ENCODE measurements at regions of chr3 and their contacts with region 1.

Region 1: GRCh38 chr3:66971891-66972551 is 26.1 kb upstream of the KBTBD8 start:
- DNase-seq: peak; percentile 81
- ATAC-seq: peak; percentile 97
- H3K4me3 Mint-ChIP-seq: peak overlapping the region; percentile 36
- H3K27ac Mint-ChIP-seq: no peak overlapping the region; the same call in 1 of the 2 replicates
- H3K4me1 Mint-ChIP-seq: peaks cover 27% of the 10 kb centered on the region
- H3K27me3 Mint-ChIP-seq: peaks cover 12% of the 10 kb centered on the region
- CTCF ChIP-seq: peak; percentile 66

Region 2: DNA sequence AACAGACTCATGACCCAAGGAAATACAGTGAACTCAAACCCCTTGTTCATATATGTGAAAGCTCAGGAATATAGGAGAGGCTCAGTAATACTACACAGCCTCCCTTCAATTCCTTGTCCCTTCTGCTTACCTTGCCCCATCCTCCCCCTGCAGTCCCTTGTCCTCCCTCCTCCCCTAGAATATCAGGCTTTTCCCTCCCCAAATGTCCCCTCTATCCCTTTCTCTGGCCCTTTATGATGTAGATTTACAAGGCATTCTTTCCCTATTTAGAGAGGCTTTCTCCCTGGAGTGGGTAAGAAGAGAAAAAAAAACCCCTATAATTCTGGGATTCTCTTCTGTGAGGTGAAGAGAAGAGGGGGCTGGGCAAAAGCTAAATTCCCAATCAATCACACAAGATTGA is 38.8 kb before region 1 on chr3:
- CTCF ChIA-PET with region 1: interaction called, 56 read pairs
- POLR2A ChIA-PET with region 1: no interaction called
- DNase-seq: no peak
- ATAC-seq: peak; percentile 96
- H3K4me3 Mint-ChIP-seq: peak overlapping the region; percentile 16; the same call in 1 of the 2 replicates
- H3K27ac Mint-ChIP-seq: peak overlapping the region; percentile 55
- H3K4me1 Mint-ChIP-seq: peaks cover 67% of the 10 kb centered on the region
- H3K27me3 Mint-ChIP-seq: no peaks in the 10 kb centered on the region
- CTCF ChIP-seq: no peak

Region 3: GRCh38 chr3:66983101-66983500 is 11.1 kb after region 1 on chr3:
- CTCF ChIA-PET with region 1: interaction called, 62 read pairs
- POLR2A ChIA-PET with region 1: interaction called, 8 read pairs
- DNase-seq: no peak
- ATAC-seq: peak; percentile 65
- H3K4me3 Mint-ChIP-seq: no peak overlapping the region
- H3K27ac Mint-ChIP-seq: no peak overlapping the region
- H3K4me1 Mint-ChIP-seq: peaks cover 34% of the 10 kb centered on the region
- H3K27me3 Mint-ChIP-seq: no peaks in the 10 kb centered on the region
- CTCF ChIP-seq: no peak

Region 4: DNA sequence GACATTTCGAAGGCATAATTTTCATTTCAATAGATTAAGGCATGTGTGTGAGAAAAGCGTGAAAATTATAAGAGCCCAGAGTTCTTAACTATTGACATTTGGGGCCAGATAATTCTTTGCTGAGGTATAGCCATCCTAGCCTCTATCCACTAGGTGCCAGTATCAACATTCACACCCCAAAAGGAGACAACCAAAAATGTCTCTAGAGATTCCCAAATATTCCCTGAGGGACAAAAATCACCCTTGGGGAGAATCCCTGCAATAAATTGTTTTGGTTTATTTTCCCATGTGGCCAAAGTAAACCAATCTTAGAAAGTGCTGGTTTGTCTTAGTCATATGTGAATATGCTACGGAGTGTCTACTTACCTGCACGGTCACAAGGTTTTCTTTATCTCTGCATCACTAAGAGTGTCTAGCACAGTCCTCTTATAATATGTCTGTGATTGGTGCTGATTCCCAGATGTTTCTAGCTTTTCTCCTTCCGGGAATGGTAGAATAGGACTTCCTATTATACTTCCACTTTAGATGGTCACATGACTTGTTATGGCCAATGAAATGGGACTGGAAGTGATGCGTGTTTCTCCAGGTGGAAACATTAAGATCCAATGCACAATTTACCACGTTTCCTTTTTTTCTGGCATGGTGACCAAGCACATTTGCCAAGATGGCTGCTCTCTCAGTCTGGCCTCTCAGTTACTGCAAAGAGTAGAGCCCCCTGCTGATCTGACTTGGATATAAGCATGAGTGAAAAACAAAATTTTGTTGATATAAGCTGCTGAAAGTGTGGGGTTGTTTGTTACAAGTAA is 18.0 kb after region 1 on chr3:
- CTCF ChIA-PET with region 1: interaction called, 62 read pairs
- POLR2A ChIA-PET with region 1: interaction called, 8 read pairs
- DNase-seq: no peak
- ATAC-seq: no peak
- H3K4me3 Mint-ChIP-seq: peak overlapping the region; percentile 50
- H3K27ac Mint-ChIP-seq: peak overlapping the region; percentile 99
- H3K4me1 Mint-ChIP-seq: peaks cover 24% of the 10 kb centered on the region
- H3K27me3 Mint-ChIP-seq: 0 out of 2 replicates have a peak, but pooled peaks cover 4% of the 10 kb centered on the region
- CTCF ChIP-seq: no peak

Region 5: DNA sequence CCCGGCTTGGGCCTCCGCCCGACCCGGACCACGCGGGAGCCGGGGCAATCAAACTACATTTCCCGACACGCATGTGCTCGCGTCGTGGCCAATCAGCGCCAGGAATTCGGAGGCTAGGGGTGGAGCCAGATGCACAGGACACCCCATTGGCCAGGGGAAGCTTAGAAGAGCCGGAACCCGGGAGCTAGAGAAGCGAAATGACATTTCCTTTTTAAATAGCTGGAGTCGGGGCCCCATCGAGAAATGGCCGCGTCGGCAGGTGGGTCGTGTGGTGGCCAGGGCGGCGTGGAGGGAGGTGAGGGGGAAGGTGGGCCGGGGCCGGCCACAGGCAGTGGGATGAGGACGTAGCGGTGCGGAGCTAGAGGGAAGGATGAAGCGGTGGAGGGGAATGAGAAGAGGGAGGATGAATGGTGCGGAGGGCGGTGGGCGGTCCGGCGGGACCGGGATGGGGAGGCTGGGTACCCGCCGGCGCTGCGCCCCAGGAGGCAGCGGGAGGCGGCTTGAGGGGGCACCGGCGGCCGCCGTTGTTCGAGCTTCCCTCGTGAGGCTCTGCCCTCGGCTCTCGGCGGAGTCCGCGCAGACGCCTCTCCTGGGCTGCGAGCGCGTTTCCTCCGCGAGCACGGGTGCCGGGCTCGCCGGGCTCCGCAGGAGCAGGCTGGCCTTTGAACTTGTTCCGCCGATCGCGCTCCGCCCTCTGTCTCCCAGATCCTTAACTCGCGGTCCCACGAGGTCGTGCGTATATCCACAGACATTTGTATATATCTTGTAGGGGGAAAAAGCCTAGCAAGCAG is 26.3 kb after region 1 on chr3 and contains the start of gene KBTBD8:
- CTCF ChIA-PET with region 1: interaction called, 18 read pairs
- POLR2A ChIA-PET with region 1: interaction called, 4 read pairs
- DNase-seq: peak; percentile 98
- ATAC-seq: peak; percentile 97
- H3K4me3 Mint-ChIP-seq: peak within 1 kb of the TSS; percentile 93
- H3K27ac Mint-ChIP-seq: no peak within 1 kb of the TSS
- H3K4me1 Mint-ChIP-seq: peaks cover 18% of the 10 kb centered on the region
- H3K27me3 Mint-ChIP-seq: 0 out of 2 replicates have a peak, but pooled peaks cover 5% of the 10 kb centered on the region
- CTCF ChIP-seq: no peak
- total RNA-seq, gene KBTBD8: 14.5 to 15.7 TPM (median 15.0 TPM) in 3 replicates

Region 6: DNA sequence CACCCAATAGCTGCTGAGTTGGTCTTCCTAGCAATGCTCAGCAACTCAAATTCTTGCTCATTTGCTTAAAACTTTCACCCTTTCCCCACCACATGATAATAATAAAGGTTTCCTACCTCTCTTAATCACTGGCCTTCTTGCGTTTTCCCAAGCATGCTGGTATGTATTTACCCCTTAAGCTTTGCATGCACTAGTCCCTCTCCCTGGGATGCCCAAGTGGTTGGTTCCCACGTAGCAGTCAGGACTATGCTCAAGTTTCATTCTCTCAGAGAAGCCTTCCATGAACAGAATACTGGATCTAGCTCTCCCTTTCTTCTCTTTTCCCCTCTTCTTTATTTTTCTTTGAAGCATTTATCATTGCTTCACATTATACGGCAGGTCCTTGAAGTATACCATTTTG is 134.9 kb after region 1 on chr3:
- CTCF ChIA-PET with region 1: interaction called, 32 read pairs
- POLR2A ChIA-PET with region 1: no interaction called
- DNase-seq: no peak
- ATAC-seq: peak; percentile 72; the same call in 1 of the 2 replicates
- H3K4me3 Mint-ChIP-seq: no peak overlapping the region
- H3K27ac Mint-ChIP-seq: peak overlapping the region; percentile 19; the same call in 1 of the 2 replicates
- H3K4me1 Mint-ChIP-seq: peaks cover 24% of the 10 kb centered on the region
- H3K27me3 Mint-ChIP-seq: no peaks in the 10 kb centered on the region
- CTCF ChIP-seq: no peak

Region 7: GRCh38 chr3:67113802-67114407 is 141.9 kb after region 1 on chr3:
- CTCF ChIA-PET with region 1: interaction called, 37 read pairs
- POLR2A ChIA-PET with region 1: no interaction called
- DNase-seq: peak; percentile 88
- ATAC-seq: peak; percentile 95
- H3K4me3 Mint-ChIP-seq: no peak overlapping the region
- H3K27ac Mint-ChIP-seq: no peak overlapping the region
- H3K4me1 Mint-ChIP-seq: peaks cover 12% of the 10 kb centered on the region
- H3K27me3 Mint-ChIP-seq: no peaks in the 10 kb centered on the region
- CTCF ChIP-seq: peak; percentile 91

Measured in WTC11 (cell line).